Activated CD8-positive, alpha-beta T cell treated with anti-CD3 and anti-CD28 coated beads for 36 hours (primary cell): ENCODE measurements at regions of chr9 and their contacts with region 1.

Region 1: DNA sequence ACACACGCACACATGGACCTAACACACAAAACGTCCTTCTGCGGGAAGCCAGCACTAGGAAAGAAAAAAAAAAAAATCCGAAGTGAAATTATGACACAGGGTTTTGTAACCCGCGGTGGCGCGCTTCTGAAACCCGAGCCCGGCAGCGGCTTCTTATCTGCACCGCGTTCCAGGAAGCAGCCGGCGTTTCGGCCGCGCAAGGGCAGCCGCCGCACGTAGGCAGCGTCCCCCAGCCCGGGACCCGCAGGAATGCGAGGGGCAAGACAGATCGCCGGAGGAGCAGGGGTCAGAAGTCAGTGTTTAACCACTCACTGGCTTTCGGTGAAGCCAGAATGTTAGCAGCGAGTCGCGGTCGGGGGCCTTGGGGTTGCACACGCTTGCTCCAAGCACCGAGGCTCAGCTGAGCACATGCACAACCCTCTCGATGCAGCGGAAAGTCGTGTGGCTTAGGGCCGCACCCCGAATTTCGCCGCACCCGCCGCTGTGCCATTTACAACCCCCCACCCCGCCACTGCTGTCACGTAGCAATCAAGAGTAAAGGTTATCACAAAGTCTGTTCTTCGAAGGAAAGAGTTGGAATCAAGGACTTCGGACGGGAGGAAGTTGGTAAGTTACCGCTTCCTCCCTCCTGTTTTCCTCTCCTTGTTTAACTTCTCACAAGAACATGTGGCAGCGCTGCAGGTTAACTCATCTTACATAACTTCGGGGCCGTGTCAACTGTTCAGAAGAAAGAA is 167.9 kb downstream of the AUH start:
- DNase-seq: peak; percentile 92
- ATAC-seq: peak; percentile 54
- H3K4me3 Mint-ChIP-seq: peak overlapping the region; percentile 67
- H3K27ac Mint-ChIP-seq: peak overlapping the region; percentile 91
- H3K4me1 Mint-ChIP-seq: peaks cover 70% of the 10 kb centered on the region
- H3K27me3 Mint-ChIP-seq: no peaks in the 10 kb centered on the region
- CTCF ChIP-seq: no peak

Region 2: DNA sequence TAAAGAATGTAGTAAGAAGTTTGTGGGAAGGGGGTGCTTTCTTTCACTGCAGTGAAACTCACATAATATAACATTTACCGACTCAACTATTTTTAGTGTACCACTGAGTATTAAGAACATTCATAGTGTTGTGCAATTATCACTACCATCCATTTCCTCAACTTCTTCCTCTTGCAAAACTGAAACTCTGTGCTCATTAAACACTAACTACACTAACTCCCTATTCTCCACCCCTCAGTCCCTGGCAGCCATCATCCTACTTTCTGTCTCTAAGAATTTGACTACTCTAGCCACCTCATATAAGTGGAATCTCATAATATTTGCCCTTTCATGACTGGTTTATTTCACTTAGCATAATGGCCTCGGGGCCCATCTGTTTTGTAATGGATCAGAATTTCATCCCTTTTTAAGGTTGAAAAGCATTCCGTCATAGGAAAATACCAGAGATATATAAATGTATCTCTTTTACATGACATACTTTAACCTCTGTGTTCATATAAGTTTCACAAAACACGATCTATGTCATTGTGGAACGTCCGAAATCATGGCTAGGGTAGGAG is 494.9 kb before region 1 on chr9:
- CTCF ChIA-PET with region 1: no interaction called
- POLR2A ChIA-PET with region 1: no interaction called
- intact Hi-C with region 1: no loop called
- DNase-seq: no peak
- ATAC-seq: no peak
- H3K4me3 Mint-ChIP-seq: no peak overlapping the region
- H3K27ac Mint-ChIP-seq: no peak overlapping the region
- H3K4me1 Mint-ChIP-seq: no peaks in the 10 kb centered on the region
- H3K27me3 Mint-ChIP-seq: peaks cover 13% of the 10 kb centered on the region
- CTCF ChIP-seq: no peak

Region 3: DNA sequence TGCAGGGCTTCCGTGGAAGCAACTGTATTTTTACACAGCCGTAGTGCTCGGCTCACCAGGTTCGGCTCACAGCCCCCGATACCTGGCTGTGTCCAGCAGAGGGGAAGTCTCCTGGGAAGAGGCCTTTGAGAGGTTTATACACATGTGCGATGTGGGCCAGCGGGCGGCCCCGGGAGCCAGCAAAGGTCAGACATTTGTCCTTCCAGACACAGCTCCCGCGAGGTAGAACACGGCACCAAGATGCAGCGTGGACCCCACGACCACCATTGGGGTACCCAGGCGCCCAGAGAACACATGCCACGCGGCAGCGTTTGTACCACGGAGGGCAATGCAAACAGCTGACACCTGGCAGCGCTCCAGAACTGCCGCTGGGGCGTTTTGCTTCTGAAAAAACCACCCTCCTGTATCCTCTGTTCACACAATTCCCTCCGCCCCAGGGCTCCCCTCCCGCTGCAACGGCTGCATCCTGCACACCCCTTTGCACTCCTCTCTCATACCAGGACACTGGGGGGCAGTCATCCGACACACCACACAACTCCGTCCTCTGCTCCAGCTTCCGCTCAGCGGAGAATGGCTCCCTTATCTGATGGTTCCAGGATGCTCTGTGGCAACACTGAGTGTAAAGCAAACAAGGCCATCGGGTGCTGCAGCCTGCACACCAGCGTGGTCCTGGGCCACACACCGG is 156.9 kb before region 1 on chr9:
- CTCF ChIA-PET with region 1: interaction called, 4 read pairs
- POLR2A ChIA-PET with region 1: interaction called, 7 read pairs
- intact Hi-C with region 1: loop called (anchors 2 kb)
- DNase-seq: peak; percentile 85
- ATAC-seq: peak; percentile 89
- H3K4me3 Mint-ChIP-seq: peak overlapping the region; percentile 37
- H3K27ac Mint-ChIP-seq: peak overlapping the region; percentile 69
- H3K4me1 Mint-ChIP-seq: peaks cover 52% of the 10 kb centered on the region
- H3K27me3 Mint-ChIP-seq: peaks cover under 1% of the 10 kb centered on the region
- CTCF ChIP-seq: peak; percentile 74

Region 4: DNA sequence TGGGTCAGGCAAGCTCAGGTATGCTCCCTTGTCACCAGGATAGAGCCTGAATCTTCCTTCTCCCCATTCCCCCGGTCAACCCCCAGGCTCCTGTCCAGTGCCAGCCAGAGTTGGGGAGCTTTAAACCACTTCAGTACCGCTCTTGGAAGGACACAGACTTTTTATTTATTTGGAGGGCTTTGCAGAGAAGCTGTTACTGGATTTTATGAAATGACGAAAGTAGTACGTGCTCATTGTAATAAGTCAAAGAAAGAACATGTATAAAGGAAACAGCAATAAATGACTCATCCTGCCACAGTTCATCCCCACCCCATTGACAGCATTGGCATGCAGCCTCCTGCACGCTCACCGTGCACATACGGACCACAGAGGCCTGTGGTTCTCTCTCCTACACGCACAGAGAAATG is 62.4 kb before region 1 on chr9:
- CTCF ChIA-PET with region 1: no interaction called
- POLR2A ChIA-PET with region 1: interaction called, 6 read pairs
- intact Hi-C with region 1: loop called (anchors 1 kb)
- DNase-seq: peak; percentile 91
- ATAC-seq: peak; percentile 98
- H3K4me3 Mint-ChIP-seq: peak overlapping the region; percentile 21
- H3K27ac Mint-ChIP-seq: peak overlapping the region; percentile 95
- H3K4me1 Mint-ChIP-seq: peaks cover 26% of the 10 kb centered on the region
- H3K27me3 Mint-ChIP-seq: no peaks in the 10 kb centered on the region
- CTCF ChIP-seq: no peak

Region 5: GRCh38 chr9:91164724-91165520 is 28.9 kb before region 1 on chr9:
- CTCF ChIA-PET with region 1: interaction called, 20 read pairs
- POLR2A ChIA-PET with region 1: interaction called, 32 read pairs
- intact Hi-C with region 1: no loop called
- DNase-seq: peak; percentile 94
- ATAC-seq: peak; percentile 79
- H3K4me3 Mint-ChIP-seq: peak overlapping the region; percentile 71
- H3K27ac Mint-ChIP-seq: peak overlapping the region; percentile 96
- H3K4me1 Mint-ChIP-seq: peaks cover 61% of the 10 kb centered on the region
- H3K27me3 Mint-ChIP-seq: no peaks in the 10 kb centered on the region
- CTCF ChIP-seq: no peak

Region 6: GRCh38 chr9:91207729-91208418 is 14.0 kb after region 1 on chr9:
- CTCF ChIA-PET with region 1: interaction called, 8 read pairs
- POLR2A ChIA-PET with region 1: interaction called, 53 read pairs
- intact Hi-C with region 1: loop called (anchors 2 kb)
- DNase-seq: peak; percentile 55
- ATAC-seq: peak; percentile 76
- H3K4me3 Mint-ChIP-seq: peak overlapping the region; percentile 35
- H3K27ac Mint-ChIP-seq: peak overlapping the region; percentile 98
- H3K4me1 Mint-ChIP-seq: peaks cover 69% of the 10 kb centered on the region
- H3K27me3 Mint-ChIP-seq: no peaks in the 10 kb centered on the region
- CTCF ChIP-seq: no peak

Region 7: DNA sequence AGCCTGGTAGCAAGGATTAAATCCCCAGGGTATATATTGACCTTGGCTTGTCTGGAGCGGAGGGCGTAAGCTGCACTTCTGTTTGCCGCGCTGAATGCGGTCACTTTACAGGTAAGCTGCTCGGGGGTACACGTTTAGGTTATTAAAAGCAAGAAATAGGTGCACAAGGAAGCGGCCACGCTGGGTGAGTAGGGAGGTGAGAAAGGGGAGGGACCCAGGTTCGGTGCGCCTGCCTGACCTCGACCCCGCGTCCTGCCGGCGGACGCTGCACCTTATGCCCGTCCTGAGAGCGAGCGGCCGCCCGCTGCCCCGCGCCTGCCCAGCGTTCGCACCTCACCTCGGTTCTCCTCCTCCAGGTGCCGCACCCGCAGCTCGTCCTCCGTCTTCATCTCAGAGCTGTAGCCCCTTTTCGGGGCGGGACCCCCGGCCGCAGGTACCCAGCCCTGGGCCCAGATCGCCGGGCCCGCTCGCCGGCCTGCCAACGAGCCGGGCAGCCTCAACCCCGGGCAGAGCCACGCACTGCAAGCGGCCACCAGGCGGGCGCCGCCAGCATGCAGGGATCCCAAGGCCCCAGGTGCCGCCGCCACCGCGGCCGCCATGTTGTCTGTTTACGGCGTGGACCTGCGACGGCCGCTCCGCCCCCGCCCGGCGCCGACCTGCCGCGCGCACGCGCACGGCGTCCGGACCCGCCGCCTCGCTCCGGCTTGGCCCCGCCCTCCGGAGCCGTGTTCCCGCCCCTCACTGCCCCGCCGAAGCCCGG is 167.6 kb after region 1 on chr9 and contains the start of gene AUH:
- CTCF ChIA-PET with region 1: interaction called, 4 read pairs
- POLR2A ChIA-PET with region 1: interaction called, 8 read pairs
- intact Hi-C with region 1: loop called (anchors 5 kb)
- DNase-seq: peak; percentile 87
- ATAC-seq: peak; percentile 92
- H3K4me3 Mint-ChIP-seq: peak within 1 kb of the TSS; percentile 89
- H3K27ac Mint-ChIP-seq: peak within 1 kb of the TSS; percentile 87
- H3K4me1 Mint-ChIP-seq: peaks cover 45% of the 10 kb centered on the region
- H3K27me3 Mint-ChIP-seq: no peaks in the 10 kb centered on the region
- CTCF ChIP-seq: no peak
- total RNA-seq, gene AUH: 30.8 to 31.1 TPM